ENCODE measurements at regions of chr12 and their contacts with region 1.

Region 1: GRCh38 chr12:56461235-56462159 is 6.9 kb upstream of the SPRYD4 start:
- DNase-seq: no peak
- H3K4me3 ChIP-seq: no peak overlapping the region
- H3K4me3 Mint-ChIP-seq: no peak overlapping the region
- H3K27ac ChIP-seq: no peak overlapping the region
- H3K27ac Mint-ChIP-seq: no peak overlapping the region
- H3K4me1 ChIP-seq: peaks cover 8% of the 10 kb centered on the region
- H3K4me1 Mint-ChIP-seq: peaks cover 2 to 5% (median 5%) of the 10 kb centered on the region in 4 donors
- H3K27me3 ChIP-seq: no peaks in the 10 kb centered on the region
- H3K27me3 Mint-ChIP-seq: no peaks in the 10 kb centered on the region

Region 2: DNA sequence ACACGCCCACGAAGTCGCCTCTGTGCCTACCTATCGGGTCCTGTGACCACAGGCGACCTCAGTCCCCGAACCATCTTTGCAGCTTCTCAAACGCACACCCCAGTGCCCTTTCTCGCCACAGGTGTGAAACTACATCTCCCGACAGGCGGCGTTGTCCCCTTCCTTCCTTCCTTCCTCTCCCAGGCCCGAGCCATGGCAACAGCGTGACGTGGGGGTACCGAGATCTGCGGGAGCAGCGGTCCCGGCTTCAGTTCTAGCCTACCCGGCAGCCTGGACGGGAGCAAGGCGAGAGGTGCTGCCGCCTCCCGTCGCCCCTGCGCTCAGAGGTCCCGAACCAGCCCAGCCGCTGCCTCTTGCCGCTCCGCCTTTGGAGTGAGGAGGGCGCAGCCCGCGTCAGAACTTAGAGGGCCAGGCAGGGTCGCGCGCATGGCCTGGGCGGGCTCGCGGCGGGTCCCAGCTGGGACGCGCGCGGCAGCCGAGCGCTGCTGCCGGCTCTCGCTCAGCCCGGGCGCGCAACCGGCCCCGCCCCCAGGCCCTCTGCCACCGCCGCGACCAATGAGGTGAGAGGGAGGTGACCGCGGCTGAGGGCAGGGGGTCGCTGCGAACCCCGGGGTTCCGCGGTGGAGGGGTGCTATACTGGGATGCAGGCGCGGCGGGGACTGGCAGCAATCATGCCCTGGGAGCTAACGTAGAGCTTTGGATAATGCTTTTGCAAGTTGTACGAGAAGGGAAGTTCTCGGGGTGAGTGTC is 194.6 kb before region 1 on chr12 and contains the start of gene COQ10A:
- CTCF ChIA-PET with region 1: interaction called, 26 read pairs
- POLR2A ChIA-PET with region 1: interaction called, 20 read pairs
- intact Hi-C with region 1: no loop called
- DNase-seq: peak; percentile 89 to 96 (median 91)
- H3K4me3 ChIP-seq: peak within 1 kb of the TSS; percentile 27 to 90
- H3K4me3 Mint-ChIP-seq: peak within 1 kb of the TSS; percentile 89 to 99 (median 96)
- H3K27ac ChIP-seq: peak within 1 kb of the TSS; percentile 84
- H3K27ac Mint-ChIP-seq: peak within 1 kb of the TSS; percentile 90 to 99 (median 97)
- H3K4me1 ChIP-seq: peaks cover 14% of the 10 kb centered on the region
- H3K4me1 Mint-ChIP-seq: peaks cover 10 to 23% (median 16%) of the 10 kb centered on the region in 4 donors
- H3K27me3 ChIP-seq: no peaks in the 10 kb centered on the region
- H3K27me3 Mint-ChIP-seq: no peaks in the 10 kb centered on the region
- total RNA-seq, gene COQ10A: 35.3 to 38.6 TPM

Region 3: GRCh38 chr12:56315622-56316473 is 145.6 kb before region 1 on chr12 and contains the start of gene CNPY2:
- CTCF ChIA-PET with region 1: interaction called, 37 read pairs
- POLR2A ChIA-PET with region 1: interaction called, 17 read pairs
- intact Hi-C with region 1: loop called (anchors 1 kb)
- DNase-seq: peak; percentile 93 to 97 (median 95)
- H3K4me3 ChIP-seq: peak within 1 kb of the TSS; percentile 99 to 100
- H3K4me3 Mint-ChIP-seq: peak within 1 kb of the TSS; percentile 97 to 100 (median 98)
- H3K27ac ChIP-seq: peak within 1 kb of the TSS; percentile 95
- H3K27ac Mint-ChIP-seq: peak within 1 kb of the TSS; percentile 98 to 100 (median 99)
- H3K4me1 ChIP-seq: peaks cover 18% of the 10 kb centered on the region
- H3K4me1 Mint-ChIP-seq: peaks cover 1 to 25% (median 13%) of the 10 kb centered on the region in 4 donors
- H3K27me3 ChIP-seq: no peaks in the 10 kb centered on the region
- H3K27me3 Mint-ChIP-seq: no peaks in the 10 kb centered on the region
- total RNA-seq, gene CNPY2: 93.5 to 95.8 TPM

Region 4: DNA sequence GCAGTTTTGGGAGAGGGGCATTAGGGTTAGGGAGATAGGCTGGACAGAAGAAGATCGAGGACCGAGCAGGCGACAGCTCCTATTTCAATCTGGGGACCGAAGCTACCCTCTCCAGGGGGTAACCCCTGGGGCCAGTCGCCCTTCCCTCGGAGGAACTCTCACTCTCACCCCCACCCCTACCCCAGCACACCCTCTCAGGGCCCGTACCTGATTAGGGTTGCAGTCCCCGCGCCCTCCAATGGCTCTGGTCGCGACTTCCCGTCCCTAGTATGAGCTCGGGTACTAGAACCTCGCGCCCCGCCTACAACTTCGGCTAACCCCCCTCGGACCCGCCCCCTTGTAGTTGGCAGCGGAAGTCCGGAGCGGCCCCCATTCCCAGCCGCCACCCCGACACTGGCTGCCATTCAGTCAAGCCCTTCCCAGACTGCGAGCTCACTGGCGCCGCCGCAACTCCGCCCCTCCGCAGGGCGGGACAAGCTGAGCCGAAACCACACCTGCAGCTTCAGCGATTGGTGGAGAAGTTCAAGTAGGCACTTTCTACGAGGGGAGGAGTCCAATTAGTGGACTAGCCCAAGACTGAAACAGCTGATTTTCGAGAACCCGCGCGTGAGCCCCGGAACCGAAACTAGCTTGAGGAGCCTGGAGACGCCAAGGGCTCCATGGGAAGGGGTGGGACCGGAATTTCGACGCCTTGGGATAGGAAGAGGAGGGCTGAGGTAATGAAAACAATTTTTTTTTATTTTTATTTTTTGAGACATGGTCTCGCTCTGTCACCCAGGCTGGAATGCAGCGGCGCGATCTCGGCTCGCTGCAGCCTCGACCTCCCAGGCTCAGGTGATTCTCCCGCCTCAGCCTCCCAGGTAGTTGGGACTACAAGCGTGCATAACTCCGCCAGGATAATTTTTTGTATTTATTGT is 101.4 kb before region 1 on chr12 and contains the start of gene STAT2:
- CTCF ChIA-PET with region 1: interaction called, 34 read pairs
- POLR2A ChIA-PET with region 1: interaction called, 11 read pairs
- intact Hi-C with region 1: loop called (anchors 1 kb)
- DNase-seq: peak; percentile 99 to 100 (median 100)
- H3K4me3 ChIP-seq: peak within 1 kb of the TSS; percentile 78 to 97
- H3K4me3 Mint-ChIP-seq: peak within 1 kb of the TSS; percentile 92 to 98 (median 96)
- H3K27ac ChIP-seq: peak within 1 kb of the TSS; percentile 84
- H3K27ac Mint-ChIP-seq: peak within 1 kb of the TSS; percentile 89 to 98 (median 96)
- H3K4me1 ChIP-seq: peaks cover 29% of the 10 kb centered on the region
- H3K4me1 Mint-ChIP-seq: peaks cover 16 to 30% (median 21%) of the 10 kb centered on the region in 4 donors
- H3K27me3 ChIP-seq: no peaks in the 10 kb centered on the region
- H3K27me3 Mint-ChIP-seq: no peaks in the 10 kb centered on the region
- total RNA-seq, gene STAT2: 192 to 193 TPM

Region 5: DNA sequence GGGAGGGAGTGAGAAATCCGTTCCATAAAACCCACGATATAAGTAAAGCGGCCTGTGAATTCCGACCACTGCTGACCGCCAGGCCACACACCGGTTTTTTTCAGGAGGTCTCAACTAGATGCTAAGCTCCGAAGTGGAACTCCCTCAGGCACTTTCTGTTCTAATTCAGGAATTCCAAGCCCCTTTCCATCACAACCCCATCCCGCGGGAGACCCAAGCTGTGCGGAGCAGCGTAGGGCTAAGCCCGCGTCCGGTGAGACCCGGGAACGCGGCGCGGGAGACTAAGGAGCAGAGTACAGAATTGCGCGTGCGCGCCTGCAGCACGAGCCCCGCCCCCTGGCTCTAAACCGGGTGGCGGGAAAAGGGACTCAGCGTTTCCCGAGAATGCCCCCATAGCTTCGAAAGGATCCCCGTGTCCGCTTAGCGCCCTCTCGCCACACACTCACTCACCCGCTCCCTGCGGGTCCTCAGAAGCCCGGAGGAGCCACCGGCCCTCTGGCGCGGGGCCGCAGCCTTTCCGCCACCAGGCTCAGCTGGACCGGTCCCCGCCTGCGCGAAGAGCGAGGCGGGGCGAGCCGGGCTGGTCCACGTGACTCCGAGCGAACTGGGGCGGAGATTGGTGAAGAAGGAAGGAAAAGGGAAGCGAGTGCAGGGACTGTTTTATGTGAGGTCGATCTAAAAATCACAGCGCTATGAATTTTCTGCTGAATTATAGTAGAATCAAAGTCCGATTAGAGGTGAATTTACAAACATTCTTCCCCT is 12.5 kb before region 1 on chr12 and contains the start of gene TIMELESS:
- CTCF ChIA-PET with region 1: interaction called, 34 read pairs
- POLR2A ChIA-PET with region 1: interaction called, 18 read pairs
- intact Hi-C with region 1: loop called (anchors 1 kb)
- DNase-seq: peak; percentile 85 to 90 (median 86)
- H3K4me3 ChIP-seq: peak within 1 kb of the TSS; percentile 96
- H3K4me3 Mint-ChIP-seq: peak within 1 kb of the TSS; percentile 90 to 95 (median 94)
- H3K27ac ChIP-seq: peak within 1 kb of the TSS; percentile 75
- H3K27ac Mint-ChIP-seq: peak within 1 kb of the TSS; percentile 75 to 98 (median 97)
- H3K4me1 ChIP-seq: peaks cover 7% of the 10 kb centered on the region
- H3K4me1 Mint-ChIP-seq: peaks cover 11 to 28% (median 16%) of the 10 kb centered on the region in 4 donors
- H3K27me3 ChIP-seq: no peaks in the 10 kb centered on the region
- H3K27me3 Mint-ChIP-seq: no peaks in the 10 kb centered on the region
- total RNA-seq, gene TIMELESS: 7.3 to 7.5 TPM